ENCODE measurements at regions of chr7 and their contacts with region 1.

Region 1: DNA sequence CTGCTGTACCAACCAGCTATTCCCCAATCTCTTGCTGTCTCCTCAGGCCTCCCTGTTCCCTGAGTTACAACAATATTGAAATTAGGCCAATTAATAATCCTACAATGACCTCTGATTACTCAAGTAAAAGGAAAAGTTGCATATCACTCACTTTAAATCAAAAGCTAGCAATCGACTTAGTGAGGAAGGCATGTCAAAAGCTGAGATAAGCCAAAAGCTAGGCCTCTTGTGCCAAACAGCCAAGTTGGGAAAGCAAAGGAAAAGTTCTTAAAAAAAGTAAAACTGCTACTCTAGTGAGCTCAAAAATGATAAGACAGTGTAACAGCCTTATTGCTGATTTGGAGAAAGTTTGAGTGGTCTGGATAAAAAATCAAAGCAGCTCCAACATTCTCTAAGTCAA is 129.8 kb downstream of the LSMEM1 start:
- DNase-seq: no peak
- ATAC-seq: no peak
- H3K4me3 ChIP-seq: no peak overlapping the region
- H3K4me3 Mint-ChIP-seq: no peak overlapping the region
- H3K27ac ChIP-seq: no peak overlapping the region
- H3K27ac Mint-ChIP-seq: no peak overlapping the region
- H3K4me1 ChIP-seq: no peaks in the 10 kb centered on the region
- H3K4me1 Mint-ChIP-seq: no peaks in the 10 kb centered on the region
- H3K27me3 ChIP-seq: peaks cover 0 to 2% of the 10 kb centered on the region in 2 experiments
- H3K27me3 Mint-ChIP-seq: peaks cover 18% of the 10 kb centered on the region
- CTCF ChIP-seq: no peak

Region 2: GRCh38 chr7:112635752-112636151 is 25.1 kb after region 1 on chr7:
- CTCF ChIA-PET with region 1: no interaction called
- POLR2A ChIA-PET with region 1: no interaction called
- intact Hi-C with region 1: loop called in 1 of 2 experiments (anchors 1 kb)
- DNase-seq: no peak
- ATAC-seq: no peak
- H3K4me3 ChIP-seq: no peak overlapping the region
- H3K4me3 Mint-ChIP-seq: no peak overlapping the region
- H3K27ac ChIP-seq: no peak overlapping the region
- H3K27ac Mint-ChIP-seq: no peak overlapping the region
- H3K4me1 ChIP-seq: no peaks in the 10 kb centered on the region
- H3K4me1 Mint-ChIP-seq: no peaks in the 10 kb centered on the region
- H3K27me3 ChIP-seq: peaks cover 3% of the 10 kb centered on the region in 2 experiments
- H3K27me3 Mint-ChIP-seq: no peaks in the 10 kb centered on the region
- CTCF ChIP-seq: no peak

Region 3: GRCh38 chr7:113331155-113331898 is 720.7 kb after region 1 on chr7:
- CTCF ChIA-PET with region 1: no interaction called
- POLR2A ChIA-PET with region 1: no interaction called
- intact Hi-C with region 1: no loop called
- DNase-seq: no peak
- ATAC-seq: no peak
- H3K4me3 ChIP-seq: no peak overlapping the region
- H3K4me3 Mint-ChIP-seq: no peak overlapping the region
- H3K27ac ChIP-seq: no peak overlapping the region
- H3K27ac Mint-ChIP-seq: no peak overlapping the region
- H3K4me1 ChIP-seq: no peaks in the 10 kb centered on the region
- H3K4me1 Mint-ChIP-seq: no peaks in the 10 kb centered on the region
- H3K27me3 ChIP-seq: no peaks in the 10 kb centered on the region
- H3K27me3 Mint-ChIP-seq: no peaks in the 10 kb centered on the region
- CTCF ChIP-seq: no peak

Measured in CD8-positive, alpha-beta T cell (primary cell).